ENCODE measurements at regions of chr10 and their contacts with region 1.

Region 1: DNA sequence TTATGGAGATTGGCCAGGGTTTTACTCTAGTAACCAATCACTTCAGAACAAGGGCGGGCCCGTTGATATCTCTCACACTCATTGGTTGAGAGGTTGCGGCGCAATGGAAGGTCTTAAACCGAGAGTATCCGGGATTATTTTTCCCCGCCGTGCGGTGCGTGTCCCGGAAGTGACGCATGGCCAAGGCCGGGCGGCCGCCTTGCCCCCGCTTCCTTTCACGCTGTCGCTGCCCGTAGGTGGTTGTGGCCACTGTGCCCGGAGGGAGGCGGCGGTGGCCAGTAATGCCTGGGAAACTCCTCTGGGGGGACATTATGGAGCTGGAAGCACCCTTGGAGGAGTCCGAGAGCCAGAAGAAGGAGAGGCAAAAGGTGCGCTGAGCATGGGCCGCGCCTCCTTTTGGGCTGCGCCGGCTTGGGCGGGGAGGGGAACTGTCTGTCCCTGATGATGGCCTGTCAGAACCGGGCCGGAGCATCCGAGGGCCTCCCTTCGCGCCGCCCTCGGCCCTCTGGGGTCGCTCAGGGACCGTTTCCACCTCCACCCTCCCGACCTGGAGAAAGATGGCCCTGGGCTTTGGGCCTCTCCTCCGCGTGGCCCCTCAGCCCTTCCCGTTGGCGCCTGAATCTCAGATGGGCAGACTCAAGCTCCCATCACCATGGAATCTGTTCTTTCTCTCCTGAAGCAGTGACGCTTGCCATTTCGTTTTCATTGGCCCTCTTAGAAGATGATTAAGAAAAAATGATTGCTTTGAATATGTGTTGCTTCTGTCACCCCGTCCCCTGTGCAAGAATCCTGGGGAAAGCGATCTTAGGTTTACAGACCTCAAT is at the start of gene DDX50:
- DNase-seq: peak in 3 of 4 experiments; percentile 94 to 99 (median 97)
- ATAC-seq: peak; percentile 97
- H3K4me3 ChIP-seq: peak within 1 kb of the TSS; percentile 74
- H3K27ac ChIP-seq: peak within 1 kb of the TSS; percentile 91
- H3K4me1 ChIP-seq: peaks cover 13 to 14% of the 10 kb centered on the region in 2 experiments; a peak in 4 of 5 replicates
- H3K27me3 ChIP-seq: no peaks in the 10 kb centered on the region
- CTCF ChIP-seq: peak in 2 of 3 experiments; percentile 16 to 33; a peak in 1 of 6 replicates
- EP300 ChIP-seq: no peak; the same call in none of the 2 replicates
- POLR2A ChIP-seq: peak; percentile 96
- RAD21 ChIP-seq: 0 out of 4 replicates have a peak, but pooled peaks of 1 of the 2 experiments have one; percentile 20
- polyA plus RNA-seq, gene DDX50: 36.7 to 57.4 TPM

Region 2: GRCh38 chr10:67788025-67788886 is 1113.1 kb before region 1 on chr10:
- CTCF ChIA-PET with region 1: no interaction called
- POLR2A ChIA-PET with region 1: no interaction called
- in situ Hi-C with region 1: no loop called
- intact Hi-C with region 1: loop called (anchors 5 kb)
- DNase-seq: peak; percentile 84 to 90 (median 88)
- ATAC-seq: peak; percentile 89
- H3K4me3 ChIP-seq: no peak overlapping the region
- H3K27ac ChIP-seq: no peak overlapping the region
- H3K4me1 ChIP-seq: peaks cover 0 to 14% of the 10 kb centered on the region in 2 experiments; a peak in 4 of 5 replicates
- H3K27me3 ChIP-seq: no peaks in the 10 kb centered on the region
- CTCF ChIP-seq: peak; percentile 87 to 95 (median 94)
- EP300 ChIP-seq: no peak
- POLR2A ChIP-seq: no peak
- RAD21 ChIP-seq: peak; percentile 95 to 98

Region 3: DNA sequence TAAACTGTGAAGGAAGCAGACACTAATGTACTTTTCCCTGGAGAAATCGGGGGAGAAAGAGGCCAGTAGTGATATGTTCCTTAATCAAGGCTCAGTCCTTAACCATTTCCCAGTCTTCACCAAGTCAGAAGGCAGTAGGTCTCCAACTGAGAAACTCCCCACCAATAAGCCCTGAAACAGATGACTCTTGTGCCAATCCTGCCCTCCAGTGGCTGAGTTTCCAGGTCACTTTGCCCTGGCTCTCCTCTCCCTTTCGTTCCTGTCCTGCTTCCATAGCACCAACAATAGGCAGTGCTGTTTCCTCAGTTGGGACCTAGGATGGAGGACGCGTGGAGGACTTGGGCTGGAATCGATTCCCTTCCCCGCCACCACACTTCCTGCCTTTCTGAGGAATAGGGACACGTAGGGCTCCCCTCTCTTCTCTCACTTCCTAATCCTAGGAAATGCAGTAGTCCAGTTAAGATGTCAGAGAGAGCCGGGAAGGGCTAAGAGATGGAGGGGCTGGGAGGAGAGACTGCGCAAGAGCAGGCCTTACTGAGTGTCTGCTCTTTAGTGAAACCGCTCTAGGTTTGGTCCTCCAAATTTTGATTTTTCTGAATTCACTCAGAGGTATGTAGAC is 692.8 kb before region 1 on chr10:
- CTCF ChIA-PET with region 1: interaction called, 3 read pairs
- POLR2A ChIA-PET with region 1: no interaction called
- in situ Hi-C with region 1: loop called (anchors 10 kb)
- intact Hi-C with region 1: loop called (anchors 2 kb)
- DNase-seq: peak in 3 of 4 experiments; percentile 25 to 62 (median 46)
- ATAC-seq: peak; percentile 84
- H3K4me3 ChIP-seq: no peak overlapping the region
- H3K27ac ChIP-seq: no peak overlapping the region
- H3K4me1 ChIP-seq: no peaks in the 10 kb centered on the region
- H3K27me3 ChIP-seq: peaks cover 30 to 32% of the 10 kb centered on the region in 2 experiments
- CTCF ChIP-seq: peak; percentile 67 to 73 (median 70)
- EP300 ChIP-seq: no peak
- POLR2A ChIP-seq: no peak
- RAD21 ChIP-seq: peak; percentile 56 to 83

Region 4: DNA sequence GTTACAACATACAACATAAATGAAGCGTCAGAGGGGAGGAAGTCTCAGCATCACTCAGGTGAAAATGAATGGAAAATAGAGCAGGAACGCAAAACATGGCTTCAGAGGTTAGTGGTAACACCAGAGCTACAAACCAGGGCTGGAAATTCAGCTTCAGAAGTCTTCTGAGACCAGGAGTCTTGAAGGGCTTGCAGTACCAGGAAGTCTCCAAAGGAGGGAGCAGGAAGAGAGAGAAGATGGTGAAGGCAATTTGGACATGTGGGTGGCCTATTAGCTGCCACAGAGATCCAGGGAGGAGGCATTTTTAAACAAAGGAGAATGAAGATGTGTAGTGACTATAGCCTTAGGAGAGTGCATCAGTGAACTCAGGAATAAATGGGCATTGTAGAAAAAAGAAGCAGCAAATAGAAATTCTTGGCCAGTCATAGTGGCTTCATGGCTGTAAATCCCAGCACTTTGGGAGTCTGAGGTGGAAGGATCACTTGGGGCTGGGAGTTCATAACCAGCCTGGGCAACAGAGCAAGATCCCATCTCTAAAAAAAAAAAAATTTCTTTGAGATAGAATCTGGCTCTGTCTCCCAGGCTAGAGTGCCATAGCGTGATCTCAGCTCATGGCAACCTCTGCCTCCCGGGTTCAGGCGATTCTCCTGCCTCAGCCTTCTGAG is 350.4 kb before region 1 on chr10:
- CTCF ChIA-PET with region 1: no interaction called
- POLR2A ChIA-PET with region 1: interaction called, 3 read pairs
- in situ Hi-C with region 1: no loop called
- intact Hi-C with region 1: loop called (anchors 10 kb)
- DNase-seq: peak; percentile 72 to 91 (median 76)
- ATAC-seq: peak; percentile 78
- H3K4me3 ChIP-seq: no peak overlapping the region
- H3K27ac ChIP-seq: no peak overlapping the region
- H3K4me1 ChIP-seq: peaks cover 17 to 20% of the 10 kb centered on the region in 2 experiments
- H3K27me3 ChIP-seq: no peaks in the 10 kb centered on the region
- CTCF ChIP-seq: peak; percentile 80 to 95 (median 95)
- EP300 ChIP-seq: no peak
- POLR2A ChIP-seq: no peak
- RAD21 ChIP-seq: peak; percentile 77 to 90

Region 5: GRCh38 chr10:68576118-68576517 is 325.2 kb before region 1 on chr10:
- CTCF ChIA-PET with region 1: no interaction called
- POLR2A ChIA-PET with region 1: no interaction called
- in situ Hi-C with region 1: no loop called
- intact Hi-C with region 1: no loop called
- DNase-seq: no peak
- ATAC-seq: peak; percentile 65
- H3K4me3 ChIP-seq: no peak overlapping the region
- H3K27ac ChIP-seq: no peak overlapping the region
- H3K4me1 ChIP-seq: no peaks in the 10 kb centered on the region
- H3K27me3 ChIP-seq: no peaks in the 10 kb centered on the region
- CTCF ChIP-seq: no peak
- EP300 ChIP-seq: no peak
- POLR2A ChIP-seq: no peak
- RAD21 ChIP-seq: no peak

Region 6: GRCh38 chr10:68684413-68684812 is 216.9 kb before region 1 on chr10:
- CTCF ChIA-PET with region 1: no interaction called
- POLR2A ChIA-PET with region 1: no interaction called
- in situ Hi-C with region 1: no loop called
- intact Hi-C with region 1: no loop called
- DNase-seq: no peak
- ATAC-seq: no peak
- H3K4me3 ChIP-seq: no peak overlapping the region
- H3K27ac ChIP-seq: no peak overlapping the region
- H3K4me1 ChIP-seq: no peaks in the 10 kb centered on the region
- H3K27me3 ChIP-seq: no peaks in the 10 kb centered on the region
- CTCF ChIP-seq: no peak
- EP300 ChIP-seq: no peak
- POLR2A ChIP-seq: no peak
- RAD21 ChIP-seq: no peak

Region 7: DNA sequence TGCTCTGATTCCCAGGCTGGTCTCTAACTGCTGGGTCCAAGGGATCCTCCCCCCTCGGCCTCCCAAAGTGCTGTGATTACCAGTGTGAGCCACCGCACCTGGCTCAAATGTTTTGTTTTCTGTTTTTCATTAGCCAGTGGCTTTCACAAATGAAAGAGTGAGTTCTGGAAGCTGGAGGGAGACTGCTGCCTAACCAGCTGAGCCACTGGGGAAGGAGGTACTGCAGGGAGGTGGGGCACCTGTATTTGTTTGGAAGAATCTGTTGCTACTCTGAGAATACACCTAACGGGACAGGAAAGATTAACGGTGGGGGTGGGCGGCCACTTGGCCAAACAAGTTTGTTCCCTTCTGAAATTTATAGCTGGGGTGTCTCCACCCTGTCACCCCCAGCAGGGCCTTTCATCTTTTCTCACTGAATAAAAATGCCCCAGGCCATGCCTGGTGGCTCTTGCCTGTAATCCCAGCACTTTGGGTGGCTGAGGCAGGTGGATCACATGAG is 69.3 kb before region 1 on chr10:
- CTCF ChIA-PET with region 1: no interaction called
- POLR2A ChIA-PET with region 1: no interaction called
- in situ Hi-C with region 1: no loop called
- intact Hi-C with region 1: loop called (anchors 5 kb)
- DNase-seq: no peak
- ATAC-seq: no peak
- H3K4me3 ChIP-seq: no peak overlapping the region
- H3K27ac ChIP-seq: no peak overlapping the region
- H3K4me1 ChIP-seq: peaks cover 0 to 11% of the 10 kb centered on the region in 2 experiments; a peak in 3 of 5 replicates
- H3K27me3 ChIP-seq: peaks cover 48 to 56% of the 10 kb centered on the region in 2 experiments
- CTCF ChIP-seq: no peak
- EP300 ChIP-seq: no peak
- POLR2A ChIP-seq: no peak
- RAD21 ChIP-seq: no peak

Region 8: DNA sequence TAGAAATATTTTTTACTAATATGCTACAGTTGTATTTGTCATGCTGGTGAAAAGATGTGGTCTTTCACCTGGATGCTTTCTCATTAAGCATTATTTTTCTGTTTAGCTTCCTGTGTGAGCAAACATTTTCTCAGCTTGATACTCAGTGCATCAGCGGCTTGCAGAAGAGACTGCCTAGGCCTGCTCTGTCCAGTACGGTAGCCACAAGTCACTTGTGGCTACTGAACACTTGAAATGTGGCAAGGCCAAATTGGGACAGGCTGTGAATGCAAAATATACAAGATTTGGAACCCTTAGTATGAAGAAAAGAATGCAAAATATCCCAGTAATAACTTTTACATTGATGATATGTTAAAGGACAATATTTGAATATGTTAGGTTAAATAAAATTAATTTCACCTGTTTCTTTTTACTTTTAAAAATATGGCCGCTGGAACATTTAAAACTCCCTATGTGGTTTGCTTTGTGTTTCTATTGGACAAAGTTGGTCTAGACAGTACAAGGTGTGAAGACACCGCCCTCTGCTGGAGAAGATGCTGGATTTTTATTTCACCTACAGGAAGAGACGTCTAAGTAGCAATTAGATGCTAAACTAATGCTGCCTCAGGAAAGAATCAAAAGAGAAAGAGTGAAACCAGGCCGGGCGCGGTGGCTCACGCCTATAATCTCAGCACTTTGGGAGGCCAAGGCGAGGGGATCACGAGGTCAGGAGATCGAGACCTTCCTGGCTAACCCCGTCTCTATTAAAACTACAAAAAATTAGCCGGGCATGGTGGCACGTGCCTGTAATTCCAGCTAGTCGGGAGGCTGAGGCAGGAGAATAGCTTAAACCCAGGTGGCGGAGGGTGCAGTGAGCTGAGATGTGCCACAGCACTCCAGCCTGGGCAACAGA is 191.9 kb after region 1 on chr10:
- CTCF ChIA-PET with region 1: no interaction called
- POLR2A ChIA-PET with region 1: no interaction called
- in situ Hi-C with region 1: no loop called
- intact Hi-C with region 1: loop called (anchors 2 kb)
- DNase-seq: peak; percentile 74 to 93 (median 80)
- ATAC-seq: peak; percentile 67
- H3K4me3 ChIP-seq: no peak overlapping the region
- H3K27ac ChIP-seq: peak overlapping the region; percentile 2; the same call in 1 of the 3 replicates
- H3K4me1 ChIP-seq: peaks cover 0 to 17% of the 10 kb centered on the region in 2 experiments; a peak in 2 of 5 replicates
- H3K27me3 ChIP-seq: no peaks in the 10 kb centered on the region
- CTCF ChIP-seq: peak; percentile 70 to 92 (median 80)
- EP300 ChIP-seq: no peak
- POLR2A ChIP-seq: no peak
- RAD21 ChIP-seq: peak; percentile 96 to 98

Measured in K562 (cell line).